Cardiac septum (tissue), 1 donor: ENCODE measurements at regions of chr15 and their contacts with region 1.

Region 1: DNA sequence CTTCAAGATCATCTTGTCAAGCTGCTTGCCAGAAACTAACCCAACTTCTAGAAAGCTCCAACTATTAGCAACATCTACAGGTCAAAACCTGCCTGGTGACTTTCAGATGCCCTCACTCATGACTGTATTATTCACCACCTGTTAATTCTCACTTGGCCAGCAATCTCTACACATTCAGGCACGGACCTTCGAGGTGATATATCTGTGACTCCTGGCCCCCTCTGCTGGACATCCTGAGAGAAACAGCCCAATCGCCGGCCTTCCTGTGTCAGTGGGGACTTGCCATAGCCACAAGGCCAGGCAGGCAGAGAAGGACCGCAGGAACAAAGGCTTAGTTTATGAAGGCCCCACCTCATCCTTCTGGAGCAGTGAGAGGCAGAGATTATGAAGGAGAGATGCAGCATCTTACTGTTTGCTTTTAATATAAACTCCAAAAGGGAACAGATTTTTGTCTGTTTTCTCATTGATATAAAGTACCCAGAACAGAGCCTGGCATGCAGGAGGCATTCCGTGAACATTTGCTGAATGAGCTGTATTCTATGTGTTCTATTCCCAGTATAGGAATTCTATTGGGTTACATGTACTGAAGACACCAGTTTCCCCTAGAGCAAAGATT is 24.4 kb upstream of the OCA2 start:
- DNase-seq: peak; percentile 82

Region 2: DNA sequence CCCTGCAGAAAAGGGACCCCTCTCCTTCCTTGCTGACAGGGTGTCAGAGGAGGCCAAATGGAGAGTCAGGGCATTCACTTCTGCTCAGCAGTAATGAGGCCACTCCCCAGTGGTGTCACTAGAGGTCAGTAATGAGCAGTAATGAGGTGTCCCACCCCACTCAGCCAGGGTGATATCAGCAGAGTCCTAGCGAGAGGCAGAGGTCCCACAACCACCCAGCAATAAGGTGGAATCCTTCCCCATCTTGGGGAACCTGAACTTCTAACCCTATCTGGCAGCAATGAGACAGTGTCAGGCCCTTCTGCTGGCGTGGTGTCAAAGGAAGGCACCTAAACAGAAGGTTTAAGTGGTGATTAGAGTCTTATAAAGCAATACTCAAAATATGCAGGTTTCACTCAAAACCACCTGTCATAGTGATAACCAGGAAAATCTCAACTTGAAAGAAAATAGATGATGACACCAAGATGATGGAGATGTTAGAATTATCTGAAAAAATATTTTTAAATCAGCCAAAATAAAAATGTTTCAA is 37.3 kb before region 1 on chr15:
- intact Hi-C with region 1: loop called (anchors 5 kb)
- DNase-seq: no peak

Region 3: GRCh38 chr15:28191832-28192231 is 68.3 kb after region 1 on chr15:
- intact Hi-C with region 1: no loop called
- DNase-seq: no peak